GM12878 (cell line): ENCODE measurements at regions of chr1 and their contacts with region 1.

Region 1: DNA sequence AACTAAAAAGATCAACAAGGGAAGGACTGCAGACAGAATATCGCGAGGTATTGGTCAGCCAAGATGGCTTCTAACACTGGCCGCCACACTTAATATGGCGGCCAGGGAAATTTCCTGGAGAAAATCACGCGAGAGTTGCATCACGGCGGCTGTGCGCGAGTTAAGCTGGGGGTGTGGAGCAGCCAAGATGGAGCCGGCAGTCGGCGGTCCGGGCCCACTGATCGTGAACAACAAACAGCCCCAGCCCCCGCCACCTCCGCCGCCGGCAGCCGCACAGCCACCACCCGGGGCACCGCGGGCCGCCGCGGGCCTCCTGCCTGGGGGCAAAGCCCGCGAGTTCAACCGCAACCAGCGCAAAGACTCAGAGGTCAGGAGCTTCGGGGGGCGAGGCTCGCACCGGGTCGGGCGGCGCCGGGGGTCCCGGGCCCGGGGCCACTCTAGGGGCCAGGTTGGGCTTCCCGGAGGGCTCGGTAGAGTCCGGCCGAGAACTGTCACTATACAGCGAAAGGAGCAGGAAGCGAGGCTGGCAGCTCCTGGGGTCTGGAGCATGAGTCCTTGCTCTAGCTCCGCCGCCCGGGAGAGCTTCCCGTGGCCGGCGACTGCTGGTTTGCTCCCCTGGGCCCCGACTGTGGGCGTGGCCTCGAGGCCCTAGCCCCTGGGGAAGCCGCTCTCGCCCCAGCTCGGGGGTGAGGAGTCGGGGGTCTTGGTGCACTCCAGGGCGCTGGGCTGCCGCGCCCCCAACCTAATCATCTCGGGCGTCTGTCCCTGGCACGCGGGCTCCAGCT is at the start of gene STRIP1:
- DNase-seq: peak; percentile 93
- ATAC-seq: peak; percentile 96
- H3K4me3 ChIP-seq: peak within 1 kb of the TSS; percentile 90
- H3K27ac ChIP-seq: peak within 1 kb of the TSS; percentile 84
- H3K4me1 ChIP-seq: peaks cover 19% of the 10 kb centered on the region
- H3K27me3 ChIP-seq: no peaks in the 10 kb centered on the region
- CTCF ChIP-seq: no peak
- EP300 ChIP-seq: no peak
- POLR2A ChIP-seq: peak; percentile 86
- RAD21 ChIP-seq: no peak
- polyA plus RNA-seq, gene STRIP1: 6.3 to 7.9 TPM

Region 2: GRCh38 chr1:109773146-109773899 is 261.3 kb before region 1 on chr1:
- CTCF ChIA-PET with region 1: interaction called, 18 read pairs
- POLR2A ChIA-PET with region 1: no interaction called
- RAD21 ChIA-PET with region 1: interaction called, 8 read pairs
- SMC1A ChIA-PET with region 1: interaction called, 3 read pairs
- in situ Hi-C with region 1: no loop called
- intact Hi-C with region 1: no loop called
- DNase-seq: peak; percentile 28
- ATAC-seq: peak; percentile 94
- H3K4me3 ChIP-seq: no peak overlapping the region
- H3K27ac ChIP-seq: no peak overlapping the region
- H3K4me1 ChIP-seq: no peaks in the 10 kb centered on the region
- H3K27me3 ChIP-seq: peaks cover 0 to 2% of the 10 kb centered on the region in 2 experiments; a peak in 1 of 4 replicates
- CTCF ChIP-seq: peak; percentile 90 to 97 (median 92)
- EP300 ChIP-seq: no peak
- POLR2A ChIP-seq: no peak
- RAD21 ChIP-seq: peak; percentile 98

Region 3: DNA sequence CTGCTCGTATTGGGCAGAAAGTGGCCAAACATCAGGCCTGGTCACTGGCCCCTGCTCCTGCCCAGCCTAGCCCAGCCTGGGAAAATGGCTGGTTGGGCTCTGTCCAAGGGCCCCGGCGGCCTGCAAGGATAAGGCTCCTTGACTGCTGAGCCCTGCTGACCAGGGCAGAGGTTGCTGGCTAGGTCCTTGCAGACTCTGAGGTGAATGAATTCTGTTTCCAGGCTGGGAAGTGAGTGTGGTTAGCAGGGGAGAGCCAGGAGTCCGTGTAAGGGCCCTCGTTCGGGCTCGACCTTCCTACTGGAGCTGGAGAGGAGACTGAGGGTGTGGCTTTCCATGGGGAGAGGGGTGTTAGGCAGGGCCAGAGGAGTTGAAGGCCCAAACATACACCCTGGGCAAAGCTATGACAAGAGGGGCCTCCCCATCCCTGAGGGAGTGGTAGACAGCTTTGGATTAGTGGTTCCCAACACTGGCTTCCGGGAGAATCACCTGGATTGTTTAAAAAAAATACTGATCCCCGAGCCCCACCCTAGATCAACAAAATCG is 103.4 kb before region 1 on chr1:
- CTCF ChIA-PET with region 1: no interaction called
- POLR2A ChIA-PET with region 1: no interaction called
- RAD21 ChIA-PET with region 1: no interaction called
- SMC1A ChIA-PET with region 1: no interaction called
- in situ Hi-C with region 1: no loop called
- intact Hi-C with region 1: no loop called
- DNase-seq: no peak
- ATAC-seq: peak; percentile 23; the same call in 1 of the 3 replicates
- H3K4me3 ChIP-seq: no peak overlapping the region
- H3K27ac ChIP-seq: no peak overlapping the region
- H3K4me1 ChIP-seq: no peaks in the 10 kb centered on the region
- H3K27me3 ChIP-seq: no peaks in the 10 kb centered on the region
- CTCF ChIP-seq: no peak
- EP300 ChIP-seq: no peak
- POLR2A ChIP-seq: peak; percentile 39; the same call in 1 of the 2 replicates
- RAD21 ChIP-seq: no peak

Region 4: GRCh38 chr1:110003747-110004630 is 30.7 kb before region 1 on chr1:
- CTCF ChIA-PET with region 1: interaction called, 24 read pairs
- POLR2A ChIA-PET with region 1: interaction called, 3 read pairs
- RAD21 ChIA-PET with region 1: interaction called, 3 read pairs
- SMC1A ChIA-PET with region 1: interaction called, 3 read pairs
- in situ Hi-C with region 1: no loop called
- intact Hi-C with region 1: no loop called
- DNase-seq: peak; percentile 45
- ATAC-seq: peak; percentile 84
- H3K4me3 ChIP-seq: peak overlapping the region; percentile 16; the same call in 1 of the 2 replicates
- H3K27ac ChIP-seq: peak overlapping the region; percentile 50
- H3K4me1 ChIP-seq: peaks cover 14% of the 10 kb centered on the region
- H3K27me3 ChIP-seq: no peaks in the 10 kb centered on the region
- CTCF ChIP-seq: no peak
- EP300 ChIP-seq: no peak
- POLR2A ChIP-seq: no peak
- RAD21 ChIP-seq: no peak

Region 5: DNA sequence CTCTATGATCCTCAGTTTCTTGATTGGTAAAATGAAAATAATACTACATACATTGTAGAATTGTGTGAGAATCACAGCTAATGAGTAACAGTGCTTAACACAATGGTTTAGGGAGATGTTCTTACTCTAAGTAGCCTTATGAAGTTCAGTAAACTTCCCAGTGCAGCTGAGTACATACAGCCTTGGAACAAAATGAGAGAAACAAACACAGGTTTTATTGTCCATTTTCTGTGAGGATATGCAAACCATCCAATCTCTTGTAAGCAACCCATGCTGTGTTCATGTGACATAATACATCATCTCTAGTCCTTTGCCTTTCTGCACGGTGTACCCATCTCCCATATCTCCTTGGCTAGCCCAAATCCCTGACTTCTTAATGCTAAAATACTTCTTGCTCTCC is 14.9 kb before region 1 on chr1:
- CTCF ChIA-PET with region 1: interaction called, 57 read pairs
- POLR2A ChIA-PET with region 1: interaction called, 5 read pairs
- RAD21 ChIA-PET with region 1: no interaction called
- SMC1A ChIA-PET with region 1: interaction called, 5 read pairs
- in situ Hi-C with region 1: no loop called
- intact Hi-C with region 1: no loop called
- DNase-seq: no peak
- ATAC-seq: no peak
- H3K4me3 ChIP-seq: no peak overlapping the region
- H3K27ac ChIP-seq: no peak overlapping the region
- H3K4me1 ChIP-seq: no peaks in the 10 kb centered on the region
- H3K27me3 ChIP-seq: no peaks in the 10 kb centered on the region
- CTCF ChIP-seq: no peak
- EP300 ChIP-seq: no peak
- POLR2A ChIP-seq: no peak
- RAD21 ChIP-seq: no peak

Region 6: DNA sequence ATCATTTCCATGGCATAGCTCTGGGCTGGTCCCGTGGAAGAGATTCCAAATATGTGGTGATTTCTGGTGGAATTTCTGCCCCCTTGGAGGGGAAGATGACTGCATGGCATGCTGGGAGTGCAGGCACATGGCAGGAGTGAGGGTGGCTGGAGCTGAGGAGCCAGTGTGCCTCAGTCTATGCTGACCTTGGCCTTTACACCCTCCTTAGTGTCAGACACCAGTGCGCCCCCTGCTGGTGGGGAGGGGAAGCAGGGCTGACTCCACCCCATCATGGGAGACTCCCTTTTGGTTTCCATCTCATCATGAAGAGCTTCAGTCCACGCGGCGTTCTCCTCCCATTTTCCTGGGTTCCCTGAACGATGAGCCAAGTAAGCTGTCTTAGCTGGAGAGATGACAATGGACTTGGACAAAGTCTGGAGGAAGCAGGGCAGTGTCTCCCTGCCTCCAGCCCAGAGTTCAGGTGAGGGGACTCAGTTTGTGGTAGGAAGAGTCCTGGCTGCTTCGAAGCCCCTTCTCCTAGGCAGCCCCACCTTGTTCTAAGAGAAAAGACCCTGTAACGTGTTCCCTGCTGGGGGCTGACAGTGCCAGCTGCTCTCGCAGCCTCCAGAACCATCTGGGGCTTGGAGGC is 25.5 kb after region 1 on chr1:
- CTCF ChIA-PET with region 1: interaction called, 57 read pairs
- POLR2A ChIA-PET with region 1: interaction called, 3 read pairs
- RAD21 ChIA-PET with region 1: interaction called, 9 read pairs
- SMC1A ChIA-PET with region 1: interaction called, 10 read pairs
- in situ Hi-C with region 1: no loop called
- intact Hi-C with region 1: no loop called
- DNase-seq: no peak
- ATAC-seq: peak; percentile 98
- H3K4me3 ChIP-seq: no peak overlapping the region
- H3K27ac ChIP-seq: no peak overlapping the region
- H3K4me1 ChIP-seq: no peaks in the 10 kb centered on the region
- H3K27me3 ChIP-seq: no peaks in the 10 kb centered on the region
- CTCF ChIP-seq: peak; percentile 86 to 99 (median 94)
- EP300 ChIP-seq: no peak
- POLR2A ChIP-seq: peak; percentile 32; the same call in 1 of the 2 replicates
- RAD21 ChIP-seq: peak; percentile 14; the same call in 1 of the 2 replicates

Region 7: GRCh38 chr1:110118636-110119615 is 84.3 kb after region 1 on chr1:
- CTCF ChIA-PET with region 1: interaction called, 18 read pairs
- POLR2A ChIA-PET with region 1: no interaction called
- RAD21 ChIA-PET with region 1: no interaction called
- SMC1A ChIA-PET with region 1: no interaction called
- in situ Hi-C with region 1: no loop called
- intact Hi-C with region 1: no loop called
- DNase-seq: no peak
- ATAC-seq: no peak
- H3K4me3 ChIP-seq: no peak overlapping the region
- H3K27ac ChIP-seq: no peak overlapping the region
- H3K4me1 ChIP-seq: no peaks in the 10 kb centered on the region
- H3K27me3 ChIP-seq: peaks cover 1 to 2% of the 10 kb centered on the region in 2 experiments; a peak in 2 of 4 replicates
- CTCF ChIP-seq: no peak
- EP300 ChIP-seq: no peak
- POLR2A ChIP-seq: no peak
- RAD21 ChIP-seq: no peak